ENCODE measurements at regions of chr1 and their contacts with region 1.

Region 1: GRCh38 chr1:92259350-92259749 is 39.4 kb downstream of the GLMN start:
- DNase-seq: no peak
- H3K4me3 Mint-ChIP-seq: no peak overlapping the region
- H3K27ac Mint-ChIP-seq: no peak overlapping the region
- H3K4me1 Mint-ChIP-seq: no peaks in the 10 kb centered on the region
- H3K27me3 Mint-ChIP-seq: no peaks in the 10 kb centered on the region

Region 2: GRCh38 chr1:92080128-92080985 is 179.0 kb before region 1 on chr1 and contains the start of gene BTBD8:
- CTCF ChIA-PET with region 1: no interaction called
- POLR2A ChIA-PET with region 1: interaction called, 15 read pairs
- DNase-seq: peak; percentile 87
- H3K4me3 Mint-ChIP-seq: peak within 1 kb of the TSS; percentile 98
- H3K27ac Mint-ChIP-seq: peak within 1 kb of the TSS; percentile 95
- H3K4me1 Mint-ChIP-seq: peaks cover 17% of the 10 kb centered on the region
- H3K27me3 Mint-ChIP-seq: no peaks in the 10 kb centered on the region
- total RNA-seq, gene BTBD8: 1.6 to 2.7 TPM